ENCODE measurements at regions of chr17 and their contacts with region 1.

Region 1: GRCh38 chr17:63600569-63601438 is at the start of gene TACO1:
- DNase-seq: peak; percentile 92
- ATAC-seq: peak; percentile 94
- H3K4me3 ChIP-seq: peak within 1 kb of the TSS; percentile 91
- H3K27ac ChIP-seq: peak within 1 kb of the TSS; percentile 40
- H3K4me1 ChIP-seq: peaks cover 16% of the 10 kb centered on the region
- H3K27me3 ChIP-seq: no peaks in the 10 kb centered on the region
- CTCF ChIP-seq: no peak
- total RNA-seq, gene TACO1: 47.9 and 70.0 TPM in 2 replicates

Region 2: GRCh38 chr17:63445979-63446691 is 154.7 kb before region 1 on chr17 and contains the start of gene CYB561:
- CTCF ChIA-PET with region 1: interaction called, 3 read pairs
- POLR2A ChIA-PET with region 1: interaction called, 13 read pairs
- intact Hi-C with region 1: no loop called
- DNase-seq: peak; percentile 90
- ATAC-seq: peak; percentile 77
- H3K4me3 ChIP-seq: peak within 1 kb of the TSS; percentile 93
- H3K27ac ChIP-seq: peak within 1 kb of the TSS; percentile 91
- H3K4me1 ChIP-seq: peaks cover 41% of the 10 kb centered on the region
- H3K27me3 ChIP-seq: no peaks in the 10 kb centered on the region
- CTCF ChIP-seq: peak; percentile 55
- total RNA-seq, gene CYB561: 125 and 145 TPM in 2 replicates

Region 3: GRCh38 chr17:63558448-63558847 is 42.4 kb before region 1 on chr17:
- CTCF ChIA-PET with region 1: no interaction called
- POLR2A ChIA-PET with region 1: no interaction called
- intact Hi-C with region 1: no loop called
- DNase-seq: no peak
- ATAC-seq: no peak; the same call in 1 of the 2 replicates
- H3K4me3 ChIP-seq: no peak overlapping the region
- H3K27ac ChIP-seq: no peak overlapping the region
- H3K4me1 ChIP-seq: peaks cover under 1% of the 10 kb centered on the region; the same call in 1 of the 2 replicates
- H3K27me3 ChIP-seq: no peaks in the 10 kb centered on the region
- CTCF ChIP-seq: no peak

Region 4: GRCh38 chr17:63646488-63646806 is 45.6 kb after region 1 on chr17:
- CTCF ChIA-PET with region 1: no interaction called
- POLR2A ChIA-PET with region 1: no interaction called
- intact Hi-C with region 1: no loop called
- DNase-seq: no peak
- ATAC-seq: no peak
- H3K4me3 ChIP-seq: no peak overlapping the region
- H3K27ac ChIP-seq: no peak overlapping the region
- H3K4me1 ChIP-seq: peaks cover 14% of the 10 kb centered on the region
- H3K27me3 ChIP-seq: no peaks in the 10 kb centered on the region
- CTCF ChIP-seq: no peak

Measured in PC-3 (cell line).